Body of pancreas (tissue), 4 donors: ENCODE measurements at regions of chr11 and their contacts with region 1.

Region 1: GRCh38 chr11:86869966-86870570 is 69.7 kb downstream of the PRSS23 start:
- DNase-seq: peak; percentile 58 to 70 (median 60)
- ATAC-seq: peak; percentile 87
- H3K4me3 ChIP-seq: no peak overlapping the region
- H3K27ac ChIP-seq: no peak overlapping the region
- H3K4me1 ChIP-seq: no peaks in the 10 kb centered on the region
- H3K27me3 ChIP-seq: no peaks in the 10 kb centered on the region
- CTCF ChIP-seq: peak; percentile 20 to 76 (median 68)
- POLR2A ChIP-seq: no peak

Region 2: GRCh38 chr11:86919557-86920210 is 49.6 kb after region 1 on chr11:
- intact Hi-C with region 1: loop called (anchors 10 kb)
- DNase-seq: peak in 1 of 4 donors; percentile 10
- ATAC-seq: peak; percentile 38
- H3K4me3 ChIP-seq: no peak overlapping the region
- H3K27ac ChIP-seq: no peak overlapping the region
- H3K4me1 ChIP-seq: peaks cover 11% of the 10 kb centered on the region
- H3K27me3 ChIP-seq: no peaks in the 10 kb centered on the region
- CTCF ChIP-seq: peak in 5 of 7 experiments; percentile 20 to 55 (median 47)
- POLR2A ChIP-seq: no peak